ENCODE measurements at regions of chr5 and their contacts with region 1.

Region 1: GRCh38 chr5:59799668-59800346 is 93.7 kb downstream of the PDE4D start:
- DNase-seq: peak; percentile 78
- H3K4me3 ChIP-seq: peak overlapping the region; percentile 55
- H3K27ac ChIP-seq: peak overlapping the region; percentile 59
- H3K4me1 ChIP-seq: peaks cover 43% of the 10 kb centered on the region
- CTCF ChIP-seq: peak; percentile 91

Region 2: DNA sequence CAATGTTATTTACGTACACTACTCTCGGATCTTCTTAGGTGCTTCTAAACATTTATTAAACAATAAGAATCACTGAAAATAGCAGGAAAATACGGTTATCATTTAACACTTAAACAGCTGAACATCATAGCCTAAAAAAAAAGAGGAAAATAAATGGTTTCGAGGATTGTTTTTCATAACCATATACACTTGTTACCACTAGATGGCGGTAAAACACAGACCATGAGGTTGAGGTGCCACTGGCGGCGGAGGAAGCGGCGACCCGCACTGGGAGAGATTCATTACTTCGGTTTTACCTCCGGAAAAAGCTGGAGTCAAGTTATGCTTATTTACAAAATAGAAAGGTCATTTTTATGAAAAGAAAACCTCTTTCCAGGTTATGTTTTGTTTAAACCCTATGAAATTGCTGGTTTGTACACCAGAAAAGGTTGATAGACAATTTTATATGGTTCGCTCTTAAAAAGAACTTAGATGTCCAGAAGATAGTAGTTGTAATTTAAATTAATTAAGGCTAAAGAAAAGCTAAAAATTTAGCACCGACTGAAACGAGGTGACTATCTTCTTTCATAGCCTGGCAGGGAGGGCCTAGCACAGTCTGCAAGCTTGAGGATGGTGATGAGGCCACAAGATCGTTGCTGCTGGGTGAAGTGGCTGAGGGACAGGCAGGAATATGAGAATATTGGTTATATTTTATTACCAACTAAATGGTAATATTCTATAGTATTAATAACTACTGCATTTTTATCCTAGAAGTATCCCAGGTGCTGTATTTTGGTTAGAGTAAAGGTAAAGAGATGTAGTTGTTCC is 611.2 kb before region 1 on chr5:
- CTCF ChIA-PET with region 1: no interaction called
- POLR2A ChIA-PET with region 1: no interaction called
- intact Hi-C with region 1: loop called (anchors 2 kb)
- DNase-seq: peak; percentile 65
- H3K4me3 ChIP-seq: no peak overlapping the region
- H3K27ac ChIP-seq: no peak overlapping the region
- H3K4me1 ChIP-seq: no peaks in the 10 kb centered on the region
- CTCF ChIP-seq: peak; percentile 88

Region 3: DNA sequence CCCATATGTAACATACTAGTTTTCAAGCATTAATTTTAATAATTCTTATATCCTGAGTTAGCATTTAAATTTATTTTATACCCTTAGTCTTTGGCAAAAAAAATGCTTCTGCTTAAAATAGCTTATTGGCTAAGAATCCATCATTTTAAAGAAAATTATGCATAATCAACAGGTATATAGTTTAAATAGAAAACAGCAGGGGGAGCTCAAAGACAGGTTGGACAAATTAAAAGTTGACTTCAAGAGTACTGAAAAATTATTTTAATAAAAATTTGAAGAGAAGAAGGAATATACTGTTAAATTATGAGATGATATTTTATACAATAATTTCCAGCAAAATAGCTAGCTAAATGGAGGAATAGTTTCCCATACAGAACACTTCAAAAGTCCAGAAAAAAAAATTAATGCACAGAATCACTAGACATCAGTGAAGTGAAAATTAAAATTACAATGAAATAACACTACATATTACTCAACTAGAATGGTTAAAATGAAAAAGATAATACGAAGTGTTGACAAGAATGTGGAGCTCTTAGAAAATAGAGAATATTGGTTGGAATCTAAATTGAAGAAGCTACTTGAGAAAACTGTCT is 293.4 kb before region 1 on chr5:
- CTCF ChIA-PET with region 1: no interaction called
- POLR2A ChIA-PET with region 1: interaction called, 3 read pairs
- intact Hi-C with region 1: loop called (anchors 2 kb)
- DNase-seq: peak; percentile 57
- H3K4me3 ChIP-seq: no peak overlapping the region
- H3K27ac ChIP-seq: no peak overlapping the region
- H3K4me1 ChIP-seq: no peaks in the 10 kb centered on the region
- CTCF ChIP-seq: peak; percentile 92

Region 4: DNA sequence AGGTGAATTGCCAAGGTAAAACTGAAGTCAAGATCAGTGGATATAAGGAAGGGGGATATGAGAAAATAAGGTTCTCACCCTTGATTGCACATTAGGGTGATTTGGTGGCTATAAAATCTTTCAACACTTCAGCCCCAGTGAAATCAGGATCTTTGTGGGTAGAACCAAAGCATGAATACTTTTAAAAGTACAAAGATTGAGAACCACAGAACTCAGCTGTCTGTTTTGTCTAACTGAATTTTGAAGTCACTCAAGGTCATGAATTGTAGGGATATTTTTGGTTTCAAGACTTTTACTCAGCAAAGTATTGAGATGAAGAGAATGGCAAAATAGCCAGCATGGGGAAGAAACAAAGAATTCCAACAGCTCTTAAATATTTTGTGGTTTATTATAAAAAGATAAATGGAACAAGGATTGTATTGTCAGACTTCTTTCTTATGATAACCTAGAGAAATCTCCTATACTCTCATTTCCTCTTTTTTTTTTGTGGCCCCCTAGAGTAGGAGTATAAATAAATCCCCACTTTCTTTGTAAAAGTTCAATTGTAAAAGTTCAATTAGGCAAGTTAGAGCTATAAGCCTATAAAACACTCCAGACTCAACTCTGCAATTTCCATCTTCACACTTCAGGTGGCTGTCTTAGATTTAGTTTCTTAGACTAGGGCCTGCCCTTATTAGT is 179.1 kb before region 1 on chr5:
- CTCF ChIA-PET with region 1: no interaction called
- POLR2A ChIA-PET with region 1: no interaction called
- intact Hi-C with region 1: no loop called
- DNase-seq: peak; percentile 8
- H3K4me3 ChIP-seq: no peak overlapping the region
- H3K27ac ChIP-seq: peak overlapping the region; percentile 1
- H3K4me1 ChIP-seq: peaks cover 20% of the 10 kb centered on the region
- CTCF ChIP-seq: 0 out of 2 replicates have a peak, but pooled peaks have one; percentile 15

Region 5: DNA sequence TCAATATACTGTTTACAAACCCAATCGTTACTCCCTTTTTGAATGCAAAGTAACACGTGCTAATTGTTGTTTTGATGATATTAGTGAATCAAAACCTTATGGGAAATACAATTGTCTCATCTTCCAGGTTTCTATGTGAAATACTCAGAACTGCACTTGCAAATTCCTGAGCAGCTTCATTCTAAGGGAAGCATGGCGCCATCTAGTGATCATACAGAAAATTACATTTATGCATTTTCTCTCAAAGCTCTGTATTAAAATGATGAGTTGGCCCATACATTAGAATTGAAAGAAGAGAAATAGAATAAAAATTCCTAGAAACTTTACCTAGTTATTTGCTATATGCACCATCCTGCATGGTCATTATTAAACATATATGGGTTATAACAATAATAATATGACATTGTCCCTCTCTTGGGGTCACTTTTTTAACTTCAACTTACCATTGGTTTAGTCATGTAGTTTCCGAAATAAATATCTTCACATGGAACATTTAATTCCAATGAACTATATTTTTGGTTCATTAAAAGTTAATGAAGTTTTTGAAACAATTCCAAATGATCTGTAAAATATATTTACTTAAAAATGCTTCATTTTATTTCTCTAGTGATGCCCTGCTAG is 126.3 kb before region 1 on chr5:
- CTCF ChIA-PET with region 1: no interaction called
- POLR2A ChIA-PET with region 1: no interaction called
- intact Hi-C with region 1: loop called (anchors 1 kb)
- DNase-seq: peak; percentile 71
- H3K4me3 ChIP-seq: no peak overlapping the region
- H3K27ac ChIP-seq: no peak overlapping the region
- H3K4me1 ChIP-seq: no peaks in the 10 kb centered on the region
- CTCF ChIP-seq: peak; percentile 97

Region 6: DNA sequence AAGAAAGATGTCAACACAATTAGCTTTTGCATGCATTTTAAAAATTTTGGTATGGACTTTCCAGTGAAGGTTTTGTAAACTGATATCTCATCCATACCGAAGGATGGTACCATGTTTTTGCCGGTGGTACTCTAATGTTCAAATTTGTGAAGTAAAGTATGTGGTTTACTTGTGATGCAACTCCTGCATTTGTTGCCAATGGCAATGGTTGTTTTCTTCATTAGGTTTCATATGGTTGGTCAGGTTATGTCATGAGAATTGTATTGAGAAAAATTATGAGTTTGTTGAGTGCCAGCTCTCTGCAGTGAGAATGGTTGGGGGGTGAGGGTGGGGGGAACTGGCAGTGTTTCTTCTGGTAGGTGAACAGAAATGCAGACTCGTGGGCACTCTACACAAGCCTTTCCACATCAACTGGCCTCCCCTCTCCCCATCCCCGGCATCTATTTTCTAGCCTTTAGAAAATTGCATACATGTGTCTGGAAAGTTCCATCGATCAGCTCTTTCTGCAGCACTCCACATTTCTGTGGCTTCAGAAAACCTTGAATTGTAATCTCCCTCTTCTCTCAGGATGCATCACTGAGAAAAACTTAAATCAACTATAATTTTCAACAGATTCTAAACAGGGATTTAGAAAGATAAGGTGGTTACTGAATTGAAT is 14.0 kb before region 1 on chr5:
- CTCF ChIA-PET with region 1: no interaction called
- POLR2A ChIA-PET with region 1: interaction called, 7 read pairs
- intact Hi-C with region 1: loop called (anchors 2 kb)
- DNase-seq: no peak
- H3K4me3 ChIP-seq: no peak overlapping the region
- H3K27ac ChIP-seq: no peak overlapping the region
- H3K4me1 ChIP-seq: peaks cover 12% of the 10 kb centered on the region
- CTCF ChIP-seq: no peak

Region 7: GRCh38 chr5:60036192-60036938 is 236.6 kb after region 1 on chr5:
- CTCF ChIA-PET with region 1: no interaction called
- POLR2A ChIA-PET with region 1: no interaction called
- intact Hi-C with region 1: no loop called
- DNase-seq: no peak
- H3K4me3 ChIP-seq: no peak overlapping the region
- H3K27ac ChIP-seq: no peak overlapping the region
- H3K4me1 ChIP-seq: no peaks in the 10 kb centered on the region
- CTCF ChIP-seq: no peak

Region 8: DNA sequence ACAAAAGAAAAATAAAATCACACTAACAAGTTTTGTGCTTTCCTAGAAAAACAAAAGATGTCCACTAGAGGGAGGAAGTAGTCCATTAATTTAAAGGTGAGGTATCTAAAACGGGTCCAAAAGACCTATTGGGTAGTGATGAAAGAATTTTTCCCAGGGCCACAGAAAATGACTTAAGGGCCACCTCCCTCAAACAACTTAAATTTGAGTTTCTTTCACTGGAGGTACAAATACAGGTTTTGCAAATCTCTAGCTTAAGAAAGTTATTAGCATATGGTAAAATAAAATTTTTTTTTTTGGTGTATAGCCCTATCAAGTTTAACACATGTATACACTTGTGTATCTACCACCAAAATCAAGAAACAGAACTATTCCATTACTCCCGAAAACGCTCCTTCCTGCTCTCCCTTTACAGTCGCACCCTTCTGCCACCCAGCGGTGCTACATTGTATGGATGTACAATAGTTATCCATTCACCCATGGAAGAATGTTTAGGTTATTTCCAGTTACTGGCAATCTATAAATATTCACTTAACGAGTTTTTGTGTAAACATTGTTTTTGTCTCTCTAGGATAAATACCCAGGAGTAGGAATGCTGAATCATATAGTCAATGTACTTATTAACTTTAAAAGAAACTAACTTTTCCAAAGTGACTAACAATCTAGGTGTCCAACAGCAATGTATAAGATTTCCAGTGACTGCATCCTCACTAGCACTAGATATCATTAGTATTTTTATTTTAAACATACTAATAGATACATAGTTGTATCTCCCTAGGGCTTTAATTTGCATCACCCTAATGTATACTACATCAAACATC is 878.2 kb after region 1 on chr5:
- CTCF ChIA-PET with region 1: no interaction called
- POLR2A ChIA-PET with region 1: no interaction called
- intact Hi-C with region 1: loop called (anchors 10 kb)
- DNase-seq: peak; percentile 33
- H3K4me3 ChIP-seq: no peak overlapping the region
- H3K27ac ChIP-seq: no peak overlapping the region
- H3K4me1 ChIP-seq: no peaks in the 10 kb centered on the region
- CTCF ChIP-seq: peak; percentile 81

Measured in OCI-LY7 (cell line).